ENCODE measurements at regions of chr2 and their contacts with region 1.

Region 1: DNA sequence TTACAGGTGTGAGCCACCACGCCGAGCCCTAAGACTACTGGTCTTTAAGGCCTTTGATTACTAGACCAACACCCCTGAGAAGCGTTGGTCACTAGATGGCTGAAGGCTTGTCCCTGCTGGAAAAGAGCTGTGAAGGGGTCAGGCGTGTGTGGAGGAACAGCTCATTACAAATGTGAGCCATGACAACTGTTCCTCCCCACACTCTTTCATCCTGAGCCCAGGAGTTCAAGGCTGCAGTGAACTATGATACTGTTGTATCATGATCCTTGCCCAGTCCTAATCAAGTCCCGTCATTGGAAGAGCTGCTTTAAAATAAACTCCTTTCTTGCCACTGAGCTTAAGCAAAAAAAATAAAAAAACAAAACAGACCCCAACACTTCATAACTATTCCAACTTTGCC is 19.5 kb upstream of the MCFD2 start:
- DNase-seq: no peak
- H3K4me3 ChIP-seq: no peak overlapping the region
- H3K27ac ChIP-seq: no peak overlapping the region
- H3K4me1 ChIP-seq: peaks cover 20% of the 10 kb centered on the region
- H3K27me3 ChIP-seq: no peaks in the 10 kb centered on the region
- CTCF ChIP-seq: no peak

Region 2: DNA sequence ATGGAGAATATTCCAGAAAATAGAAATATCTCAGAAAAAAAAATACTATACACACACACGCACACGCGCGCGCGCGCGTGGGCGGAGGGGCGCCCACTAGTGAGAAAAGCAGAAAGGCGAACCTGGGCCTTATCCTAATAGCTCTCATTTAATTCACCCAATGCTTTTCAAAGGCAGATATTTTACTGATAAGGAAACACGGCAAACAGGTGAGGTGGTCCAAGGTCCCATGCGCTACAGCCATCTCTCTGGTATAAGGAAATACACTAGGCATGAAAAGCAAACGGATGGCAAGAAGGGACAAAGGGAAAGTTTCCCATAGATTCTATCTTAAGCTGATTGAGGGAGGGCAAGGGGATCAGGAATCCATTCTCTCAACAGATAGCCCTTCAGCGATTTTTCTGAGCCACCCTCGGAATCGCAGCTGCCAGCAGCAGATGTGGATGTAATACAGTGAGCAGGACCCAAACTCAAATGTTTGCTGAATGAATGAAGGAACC is 319.0 kb before region 1 on chr2:
- CTCF ChIA-PET with region 1: no interaction called
- POLR2A ChIA-PET with region 1: interaction called, 10 read pairs
- intact Hi-C with region 1: no loop called
- DNase-seq: peak in 1 of 2 experiments; percentile 51
- H3K4me3 ChIP-seq: peak overlapping the region; percentile 84
- H3K27ac ChIP-seq: peak overlapping the region; percentile 57
- H3K4me1 ChIP-seq: peaks cover 23% of the 10 kb centered on the region
- H3K27me3 ChIP-seq: no peaks in the 10 kb centered on the region
- CTCF ChIP-seq: no peak